ENCODE measurements at regions of chr7 and their contacts with region 1.

Region 1: DNA sequence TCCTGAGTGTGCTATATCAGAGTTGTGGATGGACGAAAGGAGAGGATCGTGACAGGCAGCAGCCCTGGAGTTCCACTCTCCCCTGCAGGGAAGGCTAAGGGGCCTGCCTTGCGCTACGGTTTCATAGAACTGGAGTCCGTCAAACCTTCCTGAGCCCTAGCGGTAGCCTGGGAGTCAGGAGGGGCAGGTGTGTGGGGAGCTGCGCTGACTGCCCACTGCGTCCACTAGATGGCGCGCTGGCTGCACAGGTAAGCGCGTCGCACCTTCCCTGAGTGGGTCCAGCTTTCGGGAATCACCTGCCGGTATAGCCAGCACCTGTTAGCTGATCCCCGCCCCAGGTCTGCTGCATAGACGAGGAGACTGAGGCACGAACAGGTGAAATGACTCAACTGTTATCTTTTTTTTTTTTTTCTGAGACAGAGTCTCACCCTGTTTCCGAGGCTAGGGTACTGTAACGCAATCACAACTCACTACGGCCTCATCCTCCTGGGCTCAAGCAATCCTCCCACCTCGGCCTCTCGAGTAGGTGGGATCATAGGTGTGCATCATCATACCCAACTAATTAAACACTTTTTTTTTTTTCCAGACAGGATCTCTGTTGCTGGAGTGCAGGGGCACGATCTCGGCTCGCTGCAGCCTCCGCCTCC is 20.2 kb upstream of the BAIAP2L1 start:
- DNase-seq: peak; percentile 75 to 91
- H3K4me3 ChIP-seq: no peak overlapping the region
- H3K27ac ChIP-seq: no peak overlapping the region
- H3K4me1 ChIP-seq: no peaks in the 10 kb centered on the region
- H3K27me3 ChIP-seq: peaks cover 0 to 2% (median 0%) of the 10 kb centered on the region in 4 experiments; a peak in 1 of 7 replicates
- CTCF ChIP-seq: peak; percentile 99 to 100 (median 100)
- EP300 ChIP-seq: no peak
- POLR2A ChIP-seq: no peak
- RAD21 ChIP-seq: peak; percentile 95 to 99

Region 2: DNA sequence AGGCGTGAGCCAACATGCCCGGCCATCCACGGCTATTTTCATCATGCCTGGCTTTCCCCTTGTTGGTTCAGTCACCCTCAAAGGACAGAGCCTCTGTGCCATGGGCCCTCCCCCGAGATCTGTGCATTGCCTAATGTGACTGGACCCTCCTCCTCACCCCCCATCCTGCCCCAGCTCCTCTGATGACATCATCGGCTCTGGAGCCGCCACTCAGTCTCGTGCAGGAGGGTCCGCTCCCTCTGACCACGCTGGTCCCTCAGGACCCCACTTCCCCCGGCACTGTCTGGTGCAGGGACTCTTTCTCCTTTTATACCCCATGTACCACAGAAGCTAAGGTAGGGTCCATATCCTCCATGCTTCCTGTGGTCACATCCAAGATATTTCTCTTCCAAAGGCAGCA is 13.0 kb after region 1 on chr7:
- CTCF ChIA-PET with region 1: interaction called, 11 read pairs
- POLR2A ChIA-PET with region 1: no interaction called
- DNase-seq: no peak
- H3K4me3 ChIP-seq: no peak overlapping the region
- H3K27ac ChIP-seq: no peak overlapping the region
- H3K4me1 ChIP-seq: no peaks in the 10 kb centered on the region
- H3K27me3 ChIP-seq: no peaks in the 10 kb centered on the region
- CTCF ChIP-seq: no peak
- EP300 ChIP-seq: no peak
- POLR2A ChIP-seq: no peak
- RAD21 ChIP-seq: no peak

Region 3: GRCh38 chr7:98733036-98733435 is 311.9 kb after region 1 on chr7:
- CTCF ChIA-PET with region 1: interaction called, 10 read pairs
- POLR2A ChIA-PET with region 1: no interaction called
- DNase-seq: peak in 1 of 2 experiments; percentile 96
- H3K4me3 ChIP-seq: no peak overlapping the region
- H3K27ac ChIP-seq: no peak overlapping the region
- H3K4me1 ChIP-seq: peaks cover 0 to 12% (median 2%) of the 10 kb centered on the region in 4 experiments; a peak in 4 of 7 replicates
- H3K27me3 ChIP-seq: no peaks in the 10 kb centered on the region
- CTCF ChIP-seq: peak; percentile 70 to 97 (median 92)
- EP300 ChIP-seq: no peak
- POLR2A ChIP-seq: no peak
- RAD21 ChIP-seq: peak; percentile 58 to 74

Region 4: DNA sequence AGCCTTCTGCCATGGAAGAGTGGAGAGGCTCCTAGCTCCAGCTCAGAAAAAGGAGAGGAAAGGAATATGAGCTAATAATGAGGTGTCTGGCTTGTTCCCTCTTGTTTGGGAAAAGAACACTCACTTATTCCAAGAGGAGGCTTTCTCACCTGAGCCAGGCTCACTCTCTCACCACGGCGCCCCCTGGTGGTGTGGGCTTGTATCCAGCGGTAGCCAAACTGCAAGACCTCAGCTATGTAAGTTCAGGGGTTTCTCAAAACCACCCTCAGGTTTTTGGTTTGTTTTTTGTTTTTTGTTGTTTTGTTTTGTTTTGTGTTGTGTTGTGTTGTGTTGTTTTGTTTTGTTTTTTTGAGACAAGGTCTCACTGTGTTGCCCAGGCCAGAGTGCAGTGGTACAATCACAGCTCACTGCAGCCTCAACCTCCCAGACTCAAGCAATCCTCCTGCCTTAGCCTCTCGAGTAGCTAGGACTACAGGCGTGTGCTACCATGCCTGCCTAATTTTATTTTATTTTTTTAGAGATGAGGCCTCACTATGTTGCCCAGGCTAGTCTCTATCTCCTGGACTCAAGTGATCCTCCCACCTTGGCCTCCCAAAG is 324.7 kb after region 1 on chr7:
- CTCF ChIA-PET with region 1: interaction called, 11 read pairs
- POLR2A ChIA-PET with region 1: no interaction called
- DNase-seq: peak in 1 of 2 experiments; percentile 97
- H3K4me3 ChIP-seq: no peak overlapping the region
- H3K27ac ChIP-seq: no peak overlapping the region
- H3K4me1 ChIP-seq: no peaks in the 10 kb centered on the region; a peak in 1 of 7 replicates
- H3K27me3 ChIP-seq: no peaks in the 10 kb centered on the region
- CTCF ChIP-seq: peak; percentile 86 to 89 (median 86)
- EP300 ChIP-seq: no peak
- POLR2A ChIP-seq: no peak
- RAD21 ChIP-seq: peak; percentile 79 to 83

Measured in H1 (cell line).